HAP-1 (cell line): ENCODE measurements at regions of chr7 and their contacts with region 1.

Region 1: GRCh38 chr7:134986363-134987251 is at the start of gene AGBL3:
- DNase-seq: peak; percentile 96 to 98
- H3K4me3 ChIP-seq: peak within 1 kb of the TSS; percentile 73
- H3K4me1 ChIP-seq: peaks cover 34% of the 10 kb centered on the region
- H3K27me3 ChIP-seq: no peaks in the 10 kb centered on the region

Region 2: DNA sequence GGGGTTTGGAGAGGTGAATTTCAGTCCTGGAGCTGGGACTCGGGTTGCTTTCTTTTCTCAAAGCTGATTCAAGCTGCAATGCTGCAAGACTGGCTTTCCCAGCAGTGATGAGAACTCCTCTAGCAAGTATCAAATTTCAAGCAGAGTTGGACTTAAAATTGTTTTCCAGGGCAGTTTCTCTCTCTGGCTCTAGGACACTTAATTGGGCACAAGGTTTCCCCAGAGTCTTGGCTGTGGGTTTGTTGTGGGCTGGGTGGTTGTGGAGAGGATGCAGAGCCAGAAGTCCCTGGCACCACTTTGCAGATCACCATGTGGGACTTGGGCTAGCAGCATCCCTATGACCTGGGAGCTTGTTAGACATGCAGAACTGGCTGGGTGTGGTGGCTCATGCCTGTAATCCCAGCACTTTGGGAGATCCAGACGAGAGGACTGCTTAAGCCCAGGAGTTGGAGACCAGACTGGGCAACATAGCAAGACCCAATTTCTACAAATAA is 420.9 kb before region 1 on chr7:
- in situ Hi-C with region 1: no loop called
- DNase-seq: no peak
- H3K4me3 ChIP-seq: no peak overlapping the region
- H3K4me1 ChIP-seq: no peaks in the 10 kb centered on the region
- H3K27me3 ChIP-seq: no peaks in the 10 kb centered on the region

Region 3: DNA sequence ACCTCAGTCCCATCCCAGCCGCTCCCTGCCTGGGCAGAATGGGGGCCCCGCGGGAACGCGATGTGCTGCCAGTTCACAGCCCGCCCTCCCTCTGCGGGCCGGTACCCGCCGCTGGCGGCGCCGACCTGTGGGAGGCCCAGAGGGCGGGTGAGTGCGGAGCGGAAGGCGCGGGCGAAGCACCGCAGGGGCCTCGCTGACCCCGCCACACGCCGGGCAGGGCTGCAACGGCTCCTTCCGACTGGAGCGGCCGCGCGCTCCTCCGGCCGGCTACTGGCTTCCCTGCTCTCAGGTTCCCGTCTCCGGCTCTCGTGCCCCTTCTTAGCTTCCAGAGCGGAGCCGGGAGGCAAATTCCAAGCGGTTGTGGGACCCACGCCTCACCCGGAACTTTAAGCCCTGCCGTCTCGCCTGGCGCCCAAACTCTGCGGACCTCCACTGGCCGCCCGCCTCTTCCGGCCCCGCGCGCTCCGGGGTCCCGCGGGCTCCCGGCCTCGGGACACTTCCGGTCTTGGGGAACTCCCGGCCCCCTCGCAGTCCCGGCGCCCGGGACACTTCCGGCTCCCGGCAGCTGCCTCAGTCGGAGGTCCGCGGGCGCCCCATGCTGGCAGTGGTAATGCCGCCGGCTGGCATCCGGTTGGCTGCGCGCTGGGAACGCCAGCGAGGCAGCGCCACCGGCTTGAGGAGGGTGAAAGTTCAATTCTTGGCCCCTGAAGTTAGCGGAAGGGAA is 183.8 kb after region 1 on chr7 and contains the start of gene CYREN:
- in situ Hi-C with region 1: loop called (anchors 25 kb)
- DNase-seq: peak; percentile 90 to 96
- H3K4me3 ChIP-seq: peak within 1 kb of the TSS; percentile 94
- H3K4me1 ChIP-seq: peaks cover 9% of the 10 kb centered on the region
- H3K27me3 ChIP-seq: no peaks in the 10 kb centered on the region

Region 4: GRCh38 chr7:135238112-135238744 is 251.6 kb after region 1 on chr7:
- in situ Hi-C with region 1: no loop called
- DNase-seq: peak in 1 of 2 experiments; percentile 46
- H3K4me3 ChIP-seq: no peak overlapping the region
- H3K4me1 ChIP-seq: no peaks in the 10 kb centered on the region
- H3K27me3 ChIP-seq: no peaks in the 10 kb centered on the region; the same call in 1 of the 2 replicates